ENCODE measurements at regions of chr6 and their contacts with region 1.

Region 1: GRCh38 chr6:68876792-68877493 is 241.9 kb downstream of the ADGRB3 start:
- DNase-seq: no peak
- ATAC-seq: no peak

Region 2: GRCh38 chr6:67336014-67336413 is 1540.9 kb before region 1 on chr6:
- intact Hi-C with region 1: no loop called
- DNase-seq: no peak
- ATAC-seq: no peak

Region 3: DNA sequence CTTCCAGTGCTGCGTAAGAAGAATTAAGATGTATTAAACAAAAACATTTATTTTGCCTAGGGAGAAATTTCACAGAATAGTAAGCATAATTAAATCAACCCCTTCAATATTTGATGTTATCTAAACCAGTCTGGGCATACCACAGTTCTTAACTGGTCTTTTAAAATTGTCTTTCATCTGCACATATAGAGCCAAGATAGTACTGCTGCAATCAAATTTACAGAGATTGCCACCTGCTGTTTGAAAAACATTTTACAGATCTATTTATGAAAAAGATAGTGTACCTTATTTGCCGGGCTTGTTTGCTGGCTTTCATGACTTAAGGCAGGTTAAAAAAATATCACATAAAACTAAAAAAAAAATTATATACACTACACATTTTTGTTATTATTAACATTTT is 81.4 kb after region 1 on chr6:
- intact Hi-C with region 1: loop called (anchors 5 kb)
- DNase-seq: no peak
- ATAC-seq: no peak

Region 4: GRCh38 chr6:68967549-68968300 is 90.8 kb after region 1 on chr6:
- intact Hi-C with region 1: loop called (anchors 5 kb)
- DNase-seq: peak; percentile 63
- ATAC-seq: peak; percentile 48

Region 5: DNA sequence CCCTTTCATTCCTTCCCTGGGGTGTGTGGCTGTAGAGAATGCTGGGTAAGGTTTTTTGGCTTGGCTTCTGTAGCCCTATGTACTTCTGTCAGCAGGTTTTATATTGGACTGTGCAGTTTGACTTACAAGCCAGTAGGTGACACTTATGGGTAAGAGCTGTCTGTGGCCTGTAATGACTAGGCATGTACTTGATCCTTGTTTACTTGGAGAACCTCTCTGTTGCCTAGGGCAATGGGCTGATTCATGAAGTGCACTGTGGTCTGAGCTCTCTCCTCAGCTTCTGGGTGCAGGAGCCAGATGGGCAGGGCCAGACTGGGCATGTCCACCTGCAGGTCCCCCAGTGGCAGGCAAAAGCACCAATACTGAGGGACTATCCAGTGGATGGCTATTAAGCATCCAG is 302.7 kb after region 1 on chr6:
- intact Hi-C with region 1: no loop called
- DNase-seq: no peak
- ATAC-seq: no peak

Region 6: GRCh38 chr6:69732640-69733039 is 855.7 kb after region 1 on chr6:
- intact Hi-C with region 1: loop called (anchors 10 kb)
- DNase-seq: no peak
- ATAC-seq: no peak

Measured in Right ventricle myocardium inferior (tissue), 1 donor.